Endothelial cell of umbilical vein (primary cell): ENCODE measurements at regions of chr21 and their contacts with region 1.

Region 1: DNA sequence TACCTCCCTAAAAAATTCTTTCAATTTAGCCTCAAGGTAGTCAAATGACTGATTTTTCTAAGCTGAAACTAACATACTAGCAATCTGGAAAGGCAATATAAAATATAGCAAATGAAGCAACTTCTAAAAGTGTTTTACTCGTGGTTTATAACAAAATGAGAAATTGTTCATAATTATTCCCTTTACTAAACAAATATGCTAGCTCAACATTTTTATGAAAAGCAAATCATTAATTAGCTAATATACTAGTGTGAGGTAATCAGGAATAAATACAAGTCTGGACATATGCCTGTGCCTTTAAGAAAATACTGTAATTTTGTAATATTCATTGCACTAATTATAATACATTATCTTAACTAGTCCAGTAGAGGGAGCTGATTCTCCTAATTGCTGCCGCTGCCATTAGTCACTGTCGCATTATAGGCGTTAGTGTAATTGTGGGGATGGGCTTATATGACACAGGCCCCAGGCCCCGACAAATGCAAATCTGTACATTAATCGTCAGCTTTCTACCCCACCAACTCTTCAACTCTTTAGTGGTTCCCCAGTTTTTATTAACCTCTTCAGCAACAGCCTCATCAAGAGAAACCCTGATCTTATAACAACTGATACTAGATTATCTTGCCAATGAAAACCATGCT is 160.9 kb downstream of the GABPA start:
- DNase-seq: peak; percentile 70
- H3K4me3 ChIP-seq: no peak overlapping the region
- H3K27ac ChIP-seq: peak overlapping the region; percentile 59
- H3K4me1 ChIP-seq: peaks cover 37% of the 10 kb centered on the region
- H3K27me3 ChIP-seq: no peaks in the 10 kb centered on the region
- CTCF ChIP-seq: peak; percentile 39 to 41
- POLR2A ChIP-seq: no peak

Region 2: DNA sequence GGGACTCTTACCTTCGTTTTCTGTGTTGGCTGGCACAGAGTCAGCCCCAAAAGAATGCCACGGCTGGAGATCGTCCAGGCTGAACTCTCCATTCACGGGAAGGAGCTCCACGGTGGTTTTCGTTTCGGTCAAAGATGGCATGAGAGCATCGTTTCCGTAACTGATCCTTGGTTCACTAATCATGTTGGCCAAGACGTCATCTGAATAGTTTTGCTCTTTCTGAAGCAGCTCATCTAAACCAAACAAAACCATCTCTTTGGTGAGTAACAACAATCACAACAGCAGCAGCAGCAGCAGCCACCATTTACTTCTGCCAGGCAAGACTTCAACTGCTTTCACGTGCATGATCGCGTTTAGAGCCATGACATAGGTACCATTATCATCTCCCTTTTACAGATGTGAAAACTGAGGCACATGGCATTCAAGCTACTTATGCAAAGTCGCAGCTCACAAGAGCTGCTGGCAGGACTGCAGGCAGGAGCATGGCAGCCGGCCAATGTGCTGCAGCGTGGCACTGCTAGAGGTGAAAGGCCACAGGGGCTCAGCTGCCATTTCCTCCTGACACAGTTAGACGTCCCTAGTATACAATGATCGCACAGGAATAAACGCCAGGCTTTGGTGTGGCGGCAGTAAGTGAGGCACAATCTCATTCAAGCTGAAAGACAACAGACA is 16.2 kb after region 1 on chr21:
- CTCF ChIA-PET with region 1: interaction called, 13 read pairs
- POLR2A ChIA-PET with region 1: no interaction called
- dilution Hi-C with region 1: no loop called
- intact Hi-C with region 1: no loop called
- DNase-seq: peak; percentile 69
- H3K4me3 ChIP-seq: no peak overlapping the region
- H3K27ac ChIP-seq: no peak overlapping the region
- H3K4me1 ChIP-seq: peaks cover 34% of the 10 kb centered on the region
- H3K27me3 ChIP-seq: no peaks in the 10 kb centered on the region
- CTCF ChIP-seq: no peak
- POLR2A ChIP-seq: no peak

Region 3: DNA sequence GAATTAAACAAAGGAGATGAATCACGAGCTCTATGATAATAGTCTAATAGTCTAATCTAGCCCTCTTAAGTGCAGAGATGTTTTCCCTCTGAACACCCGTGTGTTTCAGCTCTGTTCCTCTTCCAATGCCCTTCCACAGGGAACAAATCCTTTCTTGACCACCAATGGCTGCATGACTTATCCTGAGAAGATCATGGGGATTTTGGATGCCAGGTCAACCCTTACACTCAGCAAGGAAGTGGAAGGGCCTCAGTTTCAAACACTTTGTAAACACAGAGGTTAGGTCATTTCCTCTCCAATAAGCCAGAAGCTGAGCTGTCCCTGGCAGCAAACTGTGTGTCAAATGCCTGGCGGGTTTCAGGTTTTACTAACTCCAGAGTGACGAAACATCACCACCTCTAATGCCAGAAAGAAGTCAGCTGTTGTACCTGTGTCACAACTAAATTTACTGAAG is 39.1 kb after region 1 on chr21:
- CTCF ChIA-PET with region 1: interaction called, 11 read pairs
- POLR2A ChIA-PET with region 1: interaction called, 7 read pairs
- dilution Hi-C with region 1: no loop called
- intact Hi-C with region 1: no loop called
- DNase-seq: peak; percentile 97
- H3K4me3 ChIP-seq: no peak overlapping the region
- H3K27ac ChIP-seq: peak overlapping the region; percentile 90
- H3K4me1 ChIP-seq: peaks cover 93% of the 10 kb centered on the region
- H3K27me3 ChIP-seq: no peaks in the 10 kb centered on the region
- CTCF ChIP-seq: no peak
- POLR2A ChIP-seq: no peak

Region 4: GRCh38 chr21:25983745-25984144 is 88.1 kb after region 1 on chr21:
- CTCF ChIA-PET with region 1: interaction called, 17 read pairs
- POLR2A ChIA-PET with region 1: no interaction called
- dilution Hi-C with region 1: no loop called
- intact Hi-C with region 1: loop called (anchors 5 kb)
- DNase-seq: peak; percentile 84
- H3K4me3 ChIP-seq: no peak overlapping the region
- H3K27ac ChIP-seq: peak overlapping the region; percentile 62
- H3K4me1 ChIP-seq: peaks cover 65% of the 10 kb centered on the region
- H3K27me3 ChIP-seq: no peaks in the 10 kb centered on the region
- CTCF ChIP-seq: no peak
- POLR2A ChIP-seq: peak; percentile 11

Region 5: GRCh38 chr21:26041431-26042180 is 145.9 kb after region 1 on chr21:
- CTCF ChIA-PET with region 1: interaction called, 10 read pairs
- POLR2A ChIA-PET with region 1: no interaction called
- dilution Hi-C with region 1: no loop called
- intact Hi-C with region 1: no loop called
- DNase-seq: no peak
- H3K4me3 ChIP-seq: no peak overlapping the region
- H3K27ac ChIP-seq: no peak overlapping the region
- H3K4me1 ChIP-seq: peaks cover 7% of the 10 kb centered on the region
- H3K27me3 ChIP-seq: no peaks in the 10 kb centered on the region
- CTCF ChIP-seq: no peak
- POLR2A ChIP-seq: no peak

Region 6: DNA sequence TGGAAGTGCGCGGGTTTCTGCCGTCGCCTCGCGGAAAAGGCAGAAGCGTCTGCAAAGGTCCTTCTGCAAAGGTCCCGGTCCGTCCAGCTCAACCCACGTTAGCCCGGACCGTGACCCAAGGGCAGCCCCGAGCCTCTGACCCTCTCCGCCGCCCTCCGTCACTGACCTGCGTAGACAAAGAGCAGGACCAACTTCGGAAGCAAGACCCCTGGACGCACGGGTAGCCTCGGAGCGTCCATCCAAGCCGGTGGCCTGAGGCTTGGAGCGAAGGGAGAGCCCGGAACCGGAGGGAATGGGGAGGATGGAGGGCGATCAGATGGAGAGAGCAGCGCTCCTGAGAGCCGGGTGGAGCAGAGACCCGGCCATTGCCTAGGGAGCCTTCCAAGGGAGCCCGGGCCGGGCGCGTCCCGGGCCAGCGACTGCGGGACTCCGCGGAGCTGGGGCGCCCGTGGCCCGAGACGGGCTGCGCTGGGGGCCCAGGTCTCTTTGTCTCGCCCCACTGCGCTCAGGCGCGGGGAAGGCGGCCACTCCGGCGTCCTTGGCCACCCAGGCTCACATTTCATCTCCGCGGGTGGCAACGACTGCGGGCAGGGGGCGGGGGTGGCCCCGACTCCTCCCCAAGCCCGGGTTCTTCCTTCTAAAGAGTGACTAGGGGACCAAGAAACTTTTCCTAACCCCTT is 677.2 kb after region 1 on chr21 and contains the start of gene CYYR1:
- CTCF ChIA-PET with region 1: no interaction called
- POLR2A ChIA-PET with region 1: no interaction called
- dilution Hi-C with region 1: no loop called
- intact Hi-C with region 1: loop called (anchors 5 kb)
- DNase-seq: peak; percentile 62
- H3K4me3 ChIP-seq: peak within 1 kb of the TSS; percentile 72 to 83 (median 74)
- H3K27ac ChIP-seq: peak within 1 kb of the TSS; percentile 42
- H3K4me1 ChIP-seq: peaks cover 29% of the 10 kb centered on the region
- H3K27me3 ChIP-seq: no peaks in the 10 kb centered on the region
- CTCF ChIP-seq: no peak
- POLR2A ChIP-seq: no peak
- total RNA-seq, gene CYYR1: 23.8 and 25.7 TPM in 2 replicates